Naive thymus-derived CD4-positive, alpha-beta T cell (primary cell): ENCODE measurements at regions of chr16 and their contacts with region 1.

Region 1: DNA sequence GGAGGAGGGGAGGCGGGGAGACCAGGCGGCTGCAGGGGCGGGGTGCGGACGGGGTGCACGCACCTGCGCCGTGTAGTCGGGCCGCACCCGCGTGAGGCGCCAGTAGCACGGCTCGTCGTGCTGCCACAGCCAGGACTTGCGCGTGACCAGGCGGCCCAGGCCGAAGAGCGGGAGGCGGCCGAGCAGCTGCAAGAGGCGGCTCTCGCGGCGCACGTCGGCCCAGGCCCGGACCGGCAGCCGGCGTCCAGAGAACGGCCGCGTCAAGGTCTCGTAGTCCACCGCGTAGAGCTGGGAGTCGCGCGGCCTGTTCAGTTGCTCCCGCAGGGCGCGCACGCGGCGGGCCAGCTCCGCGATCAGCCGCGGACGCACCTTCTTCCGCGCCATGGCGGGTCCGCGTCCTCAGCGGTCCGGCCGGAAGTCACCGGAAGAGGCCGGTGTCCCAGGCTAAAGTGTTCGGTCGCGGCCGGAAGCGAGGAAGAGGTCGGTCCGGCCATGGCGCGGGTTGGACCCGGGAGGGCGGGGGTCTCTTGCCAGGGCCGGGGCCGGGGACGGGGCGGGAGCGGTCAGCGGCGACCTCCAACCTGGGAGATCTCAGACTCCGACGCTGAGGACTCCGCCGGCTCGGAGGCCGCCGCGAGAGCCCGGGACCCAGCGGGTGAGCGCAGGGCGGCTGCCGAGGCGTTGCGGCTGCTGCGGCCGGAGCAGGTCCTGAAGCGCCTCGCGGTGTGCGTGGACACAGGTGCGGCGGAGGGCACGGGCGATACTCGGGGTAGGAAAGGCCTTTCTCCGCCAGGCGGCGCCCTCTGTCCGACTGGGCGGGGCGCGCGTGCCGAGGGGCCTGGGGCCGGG is at the starts of genes EME2 and MRPS34:
- DNase-seq: peak; percentile 61 to 88 (median 73)
- ATAC-seq: peak; percentile 76
- H3K4me3 ChIP-seq: peak within 1 kb of the TSS; percentile 70
- H3K4me3 Mint-ChIP-seq: peak within 1 kb of the TSS; percentile 91 to 99 (median 98)
- H3K27ac ChIP-seq: peak within 1 kb of the TSS; percentile 85
- H3K27ac Mint-ChIP-seq: peak within 1 kb of the TSS; percentile 86 to 98 (median 95)
- H3K4me1 ChIP-seq: peaks cover 13 to 26% of the 10 kb centered on the region in 2 donors
- H3K4me1 Mint-ChIP-seq: peaks cover 8 to 23% (median 12%) of the 10 kb centered on the region in 7 donors
- H3K27me3 ChIP-seq: no peaks in the 10 kb centered on the region
- H3K27me3 Mint-ChIP-seq: peaks cover 0 to 2% (median 0%) of the 10 kb centered on the region in 5 donors
- total RNA-seq, gene EME2: 32.2 to 47.5 (median 36.8) TPM
- total RNA-seq, gene MRPS34: 41.6 to 115 (median 49.5) TPM

Region 2: GRCh38 chr16:1325673-1326371 is 447.1 kb before region 1 on chr16:
- CTCF ChIA-PET with region 1: no interaction called
- POLR2A ChIA-PET with region 1: no interaction called
- intact Hi-C with region 1: no loop called
- DNase-seq: no peak
- ATAC-seq: peak; percentile 28
- H3K4me3 ChIP-seq: no peak overlapping the region
- H3K4me3 Mint-ChIP-seq: no peak overlapping the region
- H3K27ac ChIP-seq: no peak overlapping the region
- H3K27ac Mint-ChIP-seq: no peak overlapping the region
- H3K4me1 ChIP-seq: no peaks in the 10 kb centered on the region
- H3K4me1 Mint-ChIP-seq: peaks cover 0 to 4% (median 0%) of the 10 kb centered on the region in 7 donors
- H3K27me3 ChIP-seq: no peaks in the 10 kb centered on the region
- H3K27me3 Mint-ChIP-seq: peaks cover 0 to under 1% (median 0%) of the 10 kb centered on the region in 5 donors

Region 3: DNA sequence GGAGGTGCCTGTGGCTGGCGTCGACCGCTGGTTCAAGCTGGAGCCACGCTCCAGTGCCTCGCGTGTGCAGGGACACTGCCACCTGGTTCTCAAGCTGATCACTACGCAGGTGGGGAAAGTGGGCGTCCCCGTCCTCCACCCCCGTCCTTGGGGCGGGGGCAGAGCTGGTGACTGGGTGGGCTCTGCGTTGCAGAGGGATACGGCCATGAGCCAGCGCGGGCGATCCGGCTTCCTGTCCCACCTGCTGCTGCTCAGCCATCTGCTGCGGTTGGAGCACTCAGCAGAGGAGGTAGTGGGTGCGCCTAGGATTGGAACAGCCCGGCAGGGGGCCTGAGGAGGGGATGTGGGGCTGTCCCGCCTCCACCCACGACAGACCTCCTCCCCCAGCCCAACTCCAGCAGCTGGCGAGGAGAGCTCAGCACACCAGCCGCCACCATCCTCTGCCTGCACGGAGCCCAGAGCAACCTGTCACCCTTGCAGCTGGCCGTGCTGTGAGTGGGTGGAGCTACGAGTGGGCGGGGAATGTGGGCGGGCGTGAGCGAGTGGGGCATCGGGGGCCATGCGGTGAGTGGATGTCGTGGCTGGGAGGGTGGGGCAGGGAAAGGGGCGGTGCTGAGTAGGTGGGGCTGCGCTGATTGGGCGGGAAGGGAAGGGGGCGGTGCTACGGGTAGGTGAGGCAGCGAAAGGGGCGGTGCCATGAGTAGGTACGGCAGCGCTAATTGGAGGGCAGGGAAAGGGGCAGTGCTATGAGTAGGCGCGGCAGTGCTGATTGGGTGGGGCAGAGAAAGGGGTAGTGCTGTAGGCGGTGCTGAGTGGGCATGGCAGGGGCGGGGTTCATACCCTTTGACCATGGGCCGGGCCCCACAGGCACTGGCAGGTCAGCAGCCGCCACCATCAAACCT is 430.2 kb before region 1 on chr16:
- CTCF ChIA-PET with region 1: no interaction called
- POLR2A ChIA-PET with region 1: no interaction called
- intact Hi-C with region 1: loop called in 1 of 2 experiments (anchors 10 kb)
- DNase-seq: peak; percentile 85 to 97 (median 94)
- ATAC-seq: peak; percentile 97
- H3K4me3 ChIP-seq: peak overlapping the region; percentile 66
- H3K4me3 Mint-ChIP-seq: peak overlapping the region; percentile 60 to 86 (median 80)
- H3K27ac ChIP-seq: no peak overlapping the region
- H3K27ac Mint-ChIP-seq: peak overlapping the region in 8 of 9 donors; percentile 14 to 79 (median 45)
- H3K4me1 ChIP-seq: peaks cover 11 to 17% of the 10 kb centered on the region in 2 donors
- H3K4me1 Mint-ChIP-seq: peaks cover 7 to 18% (median 15%) of the 10 kb centered on the region in 7 donors
- H3K27me3 ChIP-seq: no peaks in the 10 kb centered on the region
- H3K27me3 Mint-ChIP-seq: no peaks in the 10 kb centered on the region

Region 4: DNA sequence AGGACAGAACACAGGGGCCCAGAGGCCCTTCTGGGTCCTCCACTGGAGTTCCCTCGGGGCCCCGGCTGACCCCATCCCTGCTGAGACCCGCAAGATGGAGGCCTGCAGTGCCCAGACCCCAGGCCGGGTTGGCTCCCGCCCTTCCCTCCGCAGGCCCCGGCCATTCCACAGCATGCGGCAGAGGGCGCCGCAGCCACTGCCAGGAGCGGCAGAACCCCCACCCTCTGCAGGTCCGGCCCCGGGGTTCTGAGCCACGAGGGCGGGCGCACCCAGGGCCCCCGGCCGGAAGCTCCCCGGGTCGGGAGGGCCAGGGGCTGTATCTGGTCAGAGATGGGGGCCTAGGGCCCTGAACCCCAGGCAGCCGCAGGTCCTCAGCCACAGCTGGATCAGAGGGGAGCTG is 344.4 kb before region 1 on chr16:
- CTCF ChIA-PET with region 1: no interaction called
- POLR2A ChIA-PET with region 1: no interaction called
- intact Hi-C with region 1: no loop called
- DNase-seq: peak in 6 of 9 donors; percentile 23 to 63 (median 38)
- ATAC-seq: peak; percentile 73
- H3K4me3 ChIP-seq: no peak overlapping the region
- H3K4me3 Mint-ChIP-seq: peak overlapping the region in 1 of 10 donors; percentile 53
- H3K27ac ChIP-seq: no peak overlapping the region
- H3K27ac Mint-ChIP-seq: no peak overlapping the region
- H3K4me1 ChIP-seq: no peaks in the 10 kb centered on the region
- H3K4me1 Mint-ChIP-seq: peaks cover 0 to 3% (median 0%) of the 10 kb centered on the region in 7 donors
- H3K27me3 ChIP-seq: no peaks in the 10 kb centered on the region
- H3K27me3 Mint-ChIP-seq: peaks cover 0 to 2% (median 0%) of the 10 kb centered on the region in 5 donors

Region 5: DNA sequence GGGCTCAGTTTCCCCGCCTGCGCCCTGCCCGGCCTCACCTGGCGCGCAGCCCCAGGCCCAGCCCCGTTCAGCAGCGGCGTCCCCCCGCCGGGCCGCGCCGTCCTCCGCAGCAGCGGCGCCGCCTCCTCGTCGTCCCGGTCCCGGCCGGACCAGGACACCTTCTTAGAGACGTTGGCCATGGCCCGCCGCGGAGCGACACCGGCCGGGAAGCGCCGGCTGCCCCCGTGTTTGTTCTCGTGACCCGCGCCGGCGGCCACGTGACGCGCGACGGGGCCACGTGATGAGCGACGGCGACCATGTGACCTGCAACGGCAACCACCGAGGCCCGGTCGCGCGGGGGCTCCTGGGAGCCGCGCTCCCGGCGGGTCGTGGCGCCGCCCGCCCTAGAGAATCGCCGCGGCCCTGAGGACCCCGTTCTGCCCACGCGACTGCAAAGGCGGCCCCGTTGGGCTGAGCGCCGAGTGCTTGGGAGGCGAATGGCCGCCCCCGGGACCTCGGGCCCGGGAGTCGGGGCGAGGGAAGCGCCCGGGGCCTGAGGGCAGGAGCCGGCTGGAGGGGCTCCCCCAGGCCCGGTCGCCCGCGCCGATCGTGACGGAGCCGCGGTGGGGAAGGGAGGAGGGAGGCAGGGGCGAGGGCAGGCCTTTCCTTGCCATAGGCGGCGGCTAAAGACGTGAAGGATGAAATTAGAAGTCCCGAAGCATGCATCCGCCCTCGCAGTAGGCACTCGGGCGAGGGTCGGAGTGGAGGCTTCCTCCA is 298.0 kb before region 1 on chr16 and contains the start of gene CLCN7:
- CTCF ChIA-PET with region 1: no interaction called
- POLR2A ChIA-PET with region 1: no interaction called
- intact Hi-C with region 1: loop called in 1 of 2 experiments (anchors 2 kb)
- DNase-seq: peak; percentile 79 to 95 (median 84)
- ATAC-seq: peak; percentile 91
- H3K4me3 ChIP-seq: peak within 1 kb of the TSS; percentile 67
- H3K4me3 Mint-ChIP-seq: peak within 1 kb of the TSS; percentile 80 to 90 (median 85)
- H3K27ac ChIP-seq: peak within 1 kb of the TSS; percentile 100
- H3K27ac Mint-ChIP-seq: peak within 1 kb of the TSS; percentile 77 to 95 (median 88)
- H3K4me1 ChIP-seq: peaks cover 13 to 20% of the 10 kb centered on the region in 2 donors
- H3K4me1 Mint-ChIP-seq: peaks cover 18 to 52% (median 42%) of the 10 kb centered on the region in 7 donors
- H3K27me3 ChIP-seq: no peaks in the 10 kb centered on the region
- H3K27me3 Mint-ChIP-seq: no peaks in the 10 kb centered on the region
- total RNA-seq, gene CLCN7: 74.8 to 140 (median 115) TPM

Region 6: DNA sequence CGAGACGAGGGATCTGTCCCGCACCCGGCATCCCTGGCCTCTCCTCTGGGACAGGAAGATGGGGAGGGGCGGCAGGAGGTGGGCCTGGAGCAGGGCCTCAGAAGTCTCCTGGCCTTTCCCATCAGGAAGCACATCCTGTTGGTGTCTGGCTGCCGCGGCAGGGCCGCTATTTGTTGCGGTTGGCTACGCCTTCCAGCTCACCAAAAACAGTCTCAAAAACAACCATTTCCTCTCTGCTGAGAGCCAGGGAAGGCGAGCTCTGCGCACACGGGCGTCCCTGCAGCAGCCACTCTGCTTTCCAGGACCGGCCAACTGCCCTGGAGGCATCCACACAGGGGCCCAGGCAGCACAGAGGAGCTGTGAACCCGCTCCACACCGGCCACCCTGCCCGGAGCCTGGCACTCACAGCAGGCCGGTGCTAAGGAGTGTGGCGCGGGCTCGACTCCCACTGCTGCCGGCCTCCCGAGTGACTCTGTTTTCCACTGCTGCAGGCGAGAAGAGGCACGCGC is 239.5 kb before region 1 on chr16 and contains the start of gene TMEM204:
- CTCF ChIA-PET with region 1: no interaction called
- POLR2A ChIA-PET with region 1: no interaction called
- intact Hi-C with region 1: loop called in 1 of 2 experiments (anchors 5 kb)
- DNase-seq: peak in 8 of 9 donors; percentile 39 to 69 (median 58)
- ATAC-seq: peak; percentile 56
- H3K4me3 ChIP-seq: peak within 1 kb of the TSS; percentile 85
- H3K4me3 Mint-ChIP-seq: peak within 1 kb of the TSS; percentile 92 to 100 (median 98)
- H3K27ac ChIP-seq: peak within 1 kb of the TSS; percentile 84
- H3K27ac Mint-ChIP-seq: peak within 1 kb of the TSS; percentile 76 to 97 (median 94)
- H3K4me1 ChIP-seq: peaks cover 32 to 38% of the 10 kb centered on the region in 2 donors
- H3K4me1 Mint-ChIP-seq: peaks cover 35 to 56% (median 46%) of the 10 kb centered on the region in 7 donors
- H3K27me3 ChIP-seq: no peaks in the 10 kb centered on the region
- H3K27me3 Mint-ChIP-seq: peaks cover 0 to 3% (median 0%) of the 10 kb centered on the region in 5 donors
- total RNA-seq, gene TMEM204: 26.3 to 162 (median 47.5) TPM

Region 7: DNA sequence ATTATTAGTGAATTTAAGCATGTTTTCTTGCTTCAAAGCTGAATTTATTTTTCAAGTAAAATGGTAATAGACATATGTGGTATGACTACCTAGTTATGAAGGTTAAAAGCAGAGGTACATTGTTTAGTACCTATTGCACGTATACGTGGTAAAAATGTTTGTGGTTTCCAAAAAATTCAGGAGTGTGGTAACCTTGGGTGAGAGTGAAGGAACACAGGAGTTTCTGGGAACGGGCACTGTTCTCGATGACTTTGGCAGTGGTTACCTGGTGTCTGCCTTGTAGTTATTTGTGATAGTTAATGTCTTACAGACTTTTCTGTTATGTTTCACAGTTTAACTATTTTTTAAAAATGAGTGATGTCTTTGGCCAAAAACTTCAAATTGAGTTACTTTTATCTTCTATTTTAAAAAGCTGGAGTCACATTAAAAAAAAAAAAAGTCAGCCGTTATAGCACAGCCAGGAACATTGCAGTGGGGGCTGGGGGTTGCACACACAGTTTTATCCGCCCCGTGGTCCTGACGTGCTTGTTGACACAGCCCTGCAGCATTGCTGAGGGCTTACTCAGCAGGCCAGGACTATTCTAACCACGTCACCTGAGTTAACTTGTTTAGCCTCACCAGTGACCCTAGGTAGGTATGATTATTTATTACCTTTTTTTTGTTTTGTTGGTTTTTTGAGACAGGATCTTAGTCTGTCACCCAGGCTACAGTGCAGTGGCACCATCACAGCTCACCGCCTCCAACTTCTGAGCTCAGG is 84.0 kb before region 1 on chr16:
- CTCF ChIA-PET with region 1: no interaction called
- POLR2A ChIA-PET with region 1: no interaction called
- intact Hi-C with region 1: no loop called
- DNase-seq: no peak
- ATAC-seq: no peak
- H3K4me3 ChIP-seq: no peak overlapping the region
- H3K4me3 Mint-ChIP-seq: no peak overlapping the region
- H3K27ac ChIP-seq: no peak overlapping the region
- H3K27ac Mint-ChIP-seq: peak overlapping the region in 1 of 9 donors; percentile 51
- H3K4me1 ChIP-seq: no peaks in the 10 kb centered on the region
- H3K4me1 Mint-ChIP-seq: peaks cover 0 to 15% (median 6%) of the 10 kb centered on the region in 7 donors
- H3K27me3 ChIP-seq: no peaks in the 10 kb centered on the region
- H3K27me3 Mint-ChIP-seq: no peaks in the 10 kb centered on the region

Region 8: DNA sequence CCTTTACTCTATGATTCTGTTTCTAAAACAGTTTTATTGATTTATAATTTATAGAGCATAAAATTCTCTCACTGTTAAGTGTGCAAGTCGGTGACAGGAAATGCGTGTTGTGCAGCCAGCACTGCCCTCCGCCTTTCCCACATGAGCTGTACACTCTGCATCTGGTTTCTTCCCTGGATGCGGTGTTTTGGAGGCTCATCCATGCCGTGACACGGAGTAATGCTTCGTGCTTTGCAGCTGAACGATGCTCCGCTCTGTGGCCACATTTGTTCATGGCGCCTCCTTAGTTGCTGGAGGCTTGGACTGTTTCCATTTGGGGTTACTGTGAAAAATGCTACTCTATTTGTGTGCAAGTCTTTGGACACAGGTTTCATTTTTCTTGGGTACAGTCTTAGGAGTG is 27.7 kb after region 1 on chr16:
- CTCF ChIA-PET with region 1: no interaction called
- POLR2A ChIA-PET with region 1: no interaction called
- intact Hi-C with region 1: no loop called
- DNase-seq: no peak
- ATAC-seq: no peak
- H3K4me3 ChIP-seq: no peak overlapping the region
- H3K4me3 Mint-ChIP-seq: no peak overlapping the region
- H3K27ac ChIP-seq: no peak overlapping the region
- H3K27ac Mint-ChIP-seq: no peak overlapping the region
- H3K4me1 ChIP-seq: no peaks in the 10 kb centered on the region
- H3K4me1 Mint-ChIP-seq: peaks cover 0 to 3% (median 0%) of the 10 kb centered on the region in 7 donors
- H3K27me3 ChIP-seq: no peaks in the 10 kb centered on the region
- H3K27me3 Mint-ChIP-seq: no peaks in the 10 kb centered on the region

Region 9: GRCh38 chr16:1812732-1813163 is 39.8 kb after region 1 on chr16:
- CTCF ChIA-PET with region 1: no interaction called
- POLR2A ChIA-PET with region 1: no interaction called
- intact Hi-C with region 1: loop called (anchors 1 kb)
- DNase-seq: peak in 8 of 9 donors; percentile 43 to 63 (median 52)
- ATAC-seq: peak; percentile 85
- H3K4me3 ChIP-seq: no peak overlapping the region
- H3K4me3 Mint-ChIP-seq: no peak overlapping the region
- H3K27ac ChIP-seq: no peak overlapping the region
- H3K27ac Mint-ChIP-seq: peak overlapping the region in 3 of 9 donors; percentile 10 to 57 (median 21)
- H3K4me1 ChIP-seq: no peaks in the 10 kb centered on the region
- H3K4me1 Mint-ChIP-seq: peaks cover 5 to 14% (median 9%) of the 10 kb centered on the region in 7 donors
- H3K27me3 ChIP-seq: no peaks in the 10 kb centered on the region
- H3K27me3 Mint-ChIP-seq: no peaks in the 10 kb centered on the region

Region 10: DNA sequence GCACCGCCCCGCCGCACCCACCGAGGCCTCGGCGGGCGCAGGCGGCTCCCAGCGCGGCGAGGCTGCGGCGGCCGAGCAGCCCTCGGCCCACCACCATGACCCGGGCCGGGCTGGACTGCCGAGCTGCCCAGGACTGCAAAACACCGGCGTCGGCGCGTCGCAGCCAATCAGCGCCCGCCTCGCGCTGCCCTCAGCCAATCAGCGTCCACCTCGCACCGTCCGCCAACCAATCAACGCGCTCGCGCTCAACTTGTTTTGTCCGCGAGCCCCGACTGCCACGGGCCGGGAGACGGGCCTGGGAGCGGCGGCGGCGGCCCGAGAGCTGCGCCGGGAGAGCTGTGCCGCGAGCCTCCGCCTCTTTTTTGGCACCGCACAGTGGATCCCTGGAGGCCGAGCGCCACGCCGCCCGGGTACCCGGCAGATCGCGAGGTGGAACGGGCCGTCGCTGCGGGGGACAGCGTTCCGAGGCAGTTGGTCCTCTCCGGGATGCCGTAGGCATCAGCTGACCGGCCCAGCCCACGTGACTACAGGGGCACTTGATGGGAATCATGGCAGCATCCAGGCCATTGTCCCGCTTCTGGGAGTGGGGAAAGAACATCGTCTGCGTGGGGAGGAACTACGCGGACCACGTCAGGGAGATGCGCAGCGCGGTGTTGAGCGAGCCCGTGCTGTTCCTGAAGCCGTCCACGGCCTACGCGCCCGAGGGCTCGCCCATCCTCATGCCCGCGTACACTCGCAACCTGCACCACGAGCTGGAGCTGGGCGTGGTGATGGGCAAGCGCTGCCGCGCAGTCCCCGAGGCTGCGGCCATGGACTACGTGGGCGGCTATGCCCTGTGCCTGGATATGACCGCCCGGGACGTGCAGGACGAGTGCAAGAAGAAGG is 54.0 kb after region 1 on chr16 and contains the starts of genes FAHD1 and HAGH:
- CTCF ChIA-PET with region 1: no interaction called
- POLR2A ChIA-PET with region 1: interaction called, 11 read pairs
- intact Hi-C with region 1: loop called (anchors 1 kb)
- DNase-seq: peak; percentile 83 to 98 (median 92)
- ATAC-seq: peak; percentile 91
- H3K4me3 ChIP-seq: peak within 1 kb of the TSS; percentile 99
- H3K4me3 Mint-ChIP-seq: peak within 1 kb of the TSS; percentile 82 to 98 (median 93)
- H3K27ac ChIP-seq: peak within 1 kb of the TSS; percentile 78
- H3K27ac Mint-ChIP-seq: peak within 1 kb of the TSS; percentile 85 to 94 (median 91)
- H3K4me1 ChIP-seq: peaks cover 19 to 26% of the 10 kb centered on the region in 2 donors
- H3K4me1 Mint-ChIP-seq: peaks cover 21 to 62% (median 44%) of the 10 kb centered on the region in 7 donors
- H3K27me3 ChIP-seq: no peaks in the 10 kb centered on the region
- H3K27me3 Mint-ChIP-seq: no peaks in the 10 kb centered on the region
- total RNA-seq, gene FAHD1: 7.8 to 12.9 (median 9.7) TPM
- total RNA-seq, gene HAGH: 46.2 to 72.9 (median 48.9) TPM

Region 11: GRCh38 chr16:1929578-1930337 is 156.8 kb after region 1 on chr16:
- CTCF ChIA-PET with region 1: no interaction called
- POLR2A ChIA-PET with region 1: no interaction called
- intact Hi-C with region 1: loop called in 1 of 2 experiments (anchors 1 kb)
- DNase-seq: peak; percentile 83 to 99 (median 91)
- ATAC-seq: peak; percentile 100
- H3K4me3 ChIP-seq: peak overlapping the region; percentile 48
- H3K4me3 Mint-ChIP-seq: peak overlapping the region in 6 of 10 donors; percentile 30 to 82 (median 74)
- H3K27ac ChIP-seq: peak overlapping the region; percentile 64
- H3K27ac Mint-ChIP-seq: no peak overlapping the region
- H3K4me1 ChIP-seq: no peaks in the 10 kb centered on the region
- H3K4me1 Mint-ChIP-seq: peaks cover 2 to 8% (median 4%) of the 10 kb centered on the region in 7 donors
- H3K27me3 ChIP-seq: no peaks in the 10 kb centered on the region
- H3K27me3 Mint-ChIP-seq: peaks cover 0 to 3% (median 2%) of the 10 kb centered on the region in 5 donors